ENCODE measurements at regions of chr1 and their contacts with region 1.

Region 1: DNA sequence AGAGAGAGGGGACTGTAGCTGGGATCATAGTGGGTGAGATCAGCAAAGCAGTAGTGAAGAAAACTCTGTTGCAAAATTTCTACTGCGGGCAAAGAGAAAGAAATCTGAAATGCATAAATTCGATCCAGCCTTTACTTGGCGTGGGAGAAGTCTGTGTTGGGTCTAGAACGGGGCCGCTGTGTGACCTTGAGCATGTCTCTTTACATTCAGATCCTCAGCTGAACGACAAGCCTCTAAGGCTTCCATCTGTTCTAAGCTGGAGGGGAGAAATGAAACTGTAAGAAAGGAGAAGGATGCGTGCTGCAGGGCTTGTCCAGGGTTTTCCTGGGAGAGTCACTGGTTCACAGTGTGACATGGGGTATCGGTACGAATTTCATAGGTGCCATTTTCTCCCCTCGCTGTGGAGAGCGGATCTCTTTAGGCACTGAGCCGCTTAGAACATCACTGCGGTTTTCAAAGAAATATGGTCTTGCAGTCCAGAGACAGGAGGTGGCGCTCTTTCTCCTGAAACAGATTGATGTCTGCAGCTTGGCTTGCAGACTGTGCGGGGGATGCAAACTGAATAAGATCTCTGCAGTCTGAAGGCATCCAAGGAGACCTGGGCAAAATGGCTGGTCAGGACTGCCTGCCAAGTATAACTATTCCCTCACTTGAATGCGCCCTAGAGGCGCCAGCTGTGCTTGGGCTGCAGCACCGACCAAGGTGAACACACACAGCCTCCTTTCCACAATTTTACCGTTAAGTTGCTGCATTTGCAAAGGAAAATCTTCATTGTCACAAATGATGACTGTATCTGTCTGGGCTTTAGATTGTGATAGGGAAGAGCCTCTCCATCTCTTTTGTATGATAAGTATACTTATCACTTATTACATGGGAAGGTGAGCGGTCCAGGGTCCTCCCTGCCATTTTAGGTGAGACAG is 104.1 kb downstream of the XCL2 start:
- DNase-seq: peak; percentile 68 to 83 (median 70)
- H3K4me3 ChIP-seq: no peak overlapping the region
- H3K27ac ChIP-seq: no peak overlapping the region
- H3K4me1 ChIP-seq: peaks cover 2% of the 10 kb centered on the region
- H3K27me3 ChIP-seq: no peaks in the 10 kb centered on the region
- CTCF ChIP-seq: peak; percentile 16 to 67 (median 65)
- EP300 ChIP-seq: no peak
- POLR2A ChIP-seq: no peak

Region 2: GRCh38 chr1:168572633-168573032 is 132.9 kb after region 1 on chr1:
- intact Hi-C with region 1: loop called in 2 of 4 experiments (anchors 5 to 10 kb)
- DNase-seq: no peak
- H3K4me3 ChIP-seq: no peak overlapping the region
- H3K27ac ChIP-seq: no peak overlapping the region
- H3K4me1 ChIP-seq: no peaks in the 10 kb centered on the region
- H3K27me3 ChIP-seq: no peaks in the 10 kb centered on the region
- CTCF ChIP-seq: no peak
- EP300 ChIP-seq: no peak
- POLR2A ChIP-seq: no peak

Region 3: DNA sequence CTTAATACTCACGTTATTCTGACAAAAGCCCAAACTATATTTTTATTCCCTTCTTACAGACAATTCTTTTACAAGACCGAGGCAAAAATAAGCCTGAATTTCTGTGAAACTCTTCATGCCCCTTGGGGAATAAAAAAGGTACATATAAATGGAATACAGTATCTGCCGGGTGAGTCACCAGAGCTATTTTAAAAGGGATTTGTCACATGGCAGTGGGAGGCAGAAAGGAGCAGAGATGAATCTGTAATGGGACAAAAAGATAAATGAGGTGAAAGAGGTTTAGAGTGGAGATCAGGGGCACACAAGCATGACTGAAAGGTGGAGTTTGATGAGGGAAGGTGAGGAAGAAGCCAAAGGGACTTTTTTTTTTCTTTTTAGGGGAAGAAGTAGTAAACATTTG is 145.5 kb after region 1 on chr1:
- intact Hi-C with region 1: loop called in 2 of 4 experiments (anchors 10 kb)
- DNase-seq: no peak
- H3K4me3 ChIP-seq: no peak overlapping the region
- H3K27ac ChIP-seq: no peak overlapping the region
- H3K4me1 ChIP-seq: no peaks in the 10 kb centered on the region
- H3K27me3 ChIP-seq: no peaks in the 10 kb centered on the region
- CTCF ChIP-seq: no peak
- EP300 ChIP-seq: no peak
- POLR2A ChIP-seq: no peak

Measured in ovary (tissue), 10 donors.